Left ventricle myocardium inferior (tissue), 1 donor: ENCODE measurements at regions of chr5 and their contacts with region 1.

Region 1: DNA sequence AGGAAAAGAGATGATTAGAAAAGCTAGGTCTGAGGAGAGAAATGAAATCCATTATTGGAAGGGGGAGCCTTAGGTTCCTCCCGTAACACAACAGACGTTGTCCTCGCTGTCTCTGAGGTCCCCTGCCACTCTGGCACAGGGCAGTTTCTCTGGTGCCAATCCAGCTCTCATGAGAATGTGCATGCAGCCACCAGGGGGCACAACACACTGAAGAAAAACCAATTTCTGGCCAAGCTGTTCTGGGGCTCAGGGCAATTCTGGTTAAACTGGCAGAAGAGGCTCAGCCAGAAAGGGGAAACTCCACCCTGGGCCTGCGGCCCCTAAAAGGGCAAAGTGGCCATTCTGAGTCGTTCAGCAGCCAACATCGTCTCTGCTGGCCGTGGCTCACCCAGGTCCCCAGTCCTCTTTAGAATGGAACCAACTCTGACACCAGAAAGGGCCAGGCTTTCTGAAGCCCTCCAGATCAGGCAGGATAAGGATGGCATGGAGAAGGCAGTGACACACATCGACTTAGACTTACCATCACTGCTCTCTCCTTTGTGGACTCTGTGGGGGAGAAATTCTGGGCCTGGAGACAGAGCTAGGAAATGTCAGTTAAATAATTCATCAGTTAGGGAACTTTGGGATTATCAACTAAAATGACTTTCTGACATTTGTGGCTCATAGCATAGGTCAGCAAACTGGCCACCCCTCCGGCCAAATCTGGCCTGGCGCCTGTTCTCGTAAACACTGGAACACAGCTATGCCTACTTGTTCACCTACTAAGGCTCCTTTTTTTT is 58.5 kb upstream of the GOLPH3 start:
- DNase-seq: peak; percentile 76
- H3K4me3 ChIP-seq: no peak overlapping the region
- H3K27ac ChIP-seq: peak overlapping the region; percentile 63
- H3K4me1 ChIP-seq: peaks cover 32% of the 10 kb centered on the region
- H3K27me3 ChIP-seq: no peaks in the 10 kb centered on the region
- CTCF ChIP-seq: peak; percentile 87

Region 2: GRCh38 chr5:32138839-32139493 is 93.7 kb before region 1 on chr5:
- intact Hi-C with region 1: no loop called
- DNase-seq: no peak
- H3K4me3 ChIP-seq: no peak overlapping the region
- H3K27ac ChIP-seq: no peak overlapping the region
- H3K4me1 ChIP-seq: peaks cover 19% of the 10 kb centered on the region
- H3K27me3 ChIP-seq: no peaks in the 10 kb centered on the region
- CTCF ChIP-seq: no peak

Region 3: GRCh38 chr5:32329308-32329834 is 96.7 kb after region 1 on chr5:
- intact Hi-C with region 1: loop called (anchors 5 kb)
- DNase-seq: peak; percentile 47
- H3K4me3 ChIP-seq: no peak overlapping the region
- H3K27ac ChIP-seq: no peak overlapping the region
- H3K4me1 ChIP-seq: peaks cover 12% of the 10 kb centered on the region
- H3K27me3 ChIP-seq: no peaks in the 10 kb centered on the region
- CTCF ChIP-seq: peak; percentile 82